Endothelial cell of umbilical vein (primary cell): ENCODE measurements at regions of chr4 and their contacts with region 1.

Region 1: GRCh38 chr4:123661080-123661737 is 264.6 kb downstream of the SPRY1 start:
- DNase-seq: peak; percentile 49
- H3K4me3 ChIP-seq: no peak overlapping the region
- H3K27ac ChIP-seq: no peak overlapping the region
- H3K4me1 ChIP-seq: no peaks in the 10 kb centered on the region
- H3K27me3 ChIP-seq: no peaks in the 10 kb centered on the region
- CTCF ChIP-seq: peak; percentile 27 to 37
- POLR2A ChIP-seq: no peak

Region 2: GRCh38 chr4:123102897-123103471 is 558.2 kb before region 1 on chr4:
- CTCF ChIA-PET with region 1: interaction called, 10 read pairs
- POLR2A ChIA-PET with region 1: no interaction called
- dilution Hi-C with region 1: no loop called
- intact Hi-C with region 1: loop called (anchors 1 kb)
- DNase-seq: peak; percentile 52
- H3K4me3 ChIP-seq: no peak overlapping the region
- H3K27ac ChIP-seq: no peak overlapping the region
- H3K4me1 ChIP-seq: no peaks in the 10 kb centered on the region
- H3K27me3 ChIP-seq: no peaks in the 10 kb centered on the region
- CTCF ChIP-seq: peak; percentile 37 to 44
- POLR2A ChIP-seq: no peak

Region 3: GRCh38 chr4:123340381-123340701 is 320.9 kb before region 1 on chr4:
- CTCF ChIA-PET with region 1: no interaction called
- POLR2A ChIA-PET with region 1: no interaction called
- dilution Hi-C with region 1: no loop called
- intact Hi-C with region 1: loop called (anchors 5 kb)
- DNase-seq: peak; percentile 92
- H3K4me3 ChIP-seq: no peak overlapping the region
- H3K27ac ChIP-seq: peak overlapping the region; percentile 90
- H3K4me1 ChIP-seq: peaks cover 58% of the 10 kb centered on the region
- H3K27me3 ChIP-seq: no peaks in the 10 kb centered on the region
- CTCF ChIP-seq: no peak
- POLR2A ChIP-seq: peak; percentile 29

Region 4: DNA sequence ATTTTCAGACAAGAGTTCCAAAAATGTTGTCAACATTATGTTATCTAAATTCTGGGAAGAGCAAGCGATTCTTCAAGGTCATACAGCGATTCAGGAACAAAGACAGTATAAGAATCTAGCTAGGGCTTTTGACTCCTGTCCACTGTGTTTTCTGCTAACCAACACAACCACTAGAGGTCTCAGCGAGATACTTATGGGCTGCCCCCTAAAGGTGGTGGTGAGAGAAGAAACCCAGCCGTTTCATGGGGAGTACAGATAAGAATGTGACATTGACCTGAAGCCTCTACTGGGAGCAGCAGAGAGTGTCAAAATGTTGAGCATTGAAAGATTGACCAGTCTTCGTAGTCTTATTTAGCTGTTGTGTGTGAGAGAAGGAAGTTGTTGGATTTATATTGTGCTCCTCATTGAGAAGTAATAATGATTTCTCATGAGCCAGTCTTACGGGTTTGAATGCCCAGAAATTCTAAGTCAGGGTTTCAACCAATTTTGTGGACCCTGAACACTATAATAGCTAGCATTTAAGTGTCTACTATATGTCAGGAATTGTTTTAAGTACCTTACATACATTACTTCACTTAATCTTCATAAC is 96.4 kb before region 1 on chr4:
- CTCF ChIA-PET with region 1: interaction called, 30 read pairs
- POLR2A ChIA-PET with region 1: no interaction called
- dilution Hi-C with region 1: no loop called
- intact Hi-C with region 1: loop called (anchors 1 kb)
- DNase-seq: peak; percentile 74
- H3K4me3 ChIP-seq: no peak overlapping the region
- H3K27ac ChIP-seq: no peak overlapping the region
- H3K4me1 ChIP-seq: peaks cover 5% of the 10 kb centered on the region
- H3K27me3 ChIP-seq: peaks cover 2 to 5% of the 10 kb centered on the region in 2 experiments
- CTCF ChIP-seq: peak; percentile 81 to 84
- POLR2A ChIP-seq: no peak

Region 5: GRCh38 chr4:123649645-123650391 is 11.4 kb before region 1 on chr4:
- CTCF ChIA-PET with region 1: interaction called, 12 read pairs
- POLR2A ChIA-PET with region 1: no interaction called
- dilution Hi-C with region 1: no loop called
- intact Hi-C with region 1: no loop called
- DNase-seq: no peak
- H3K4me3 ChIP-seq: no peak overlapping the region
- H3K27ac ChIP-seq: no peak overlapping the region
- H3K4me1 ChIP-seq: no peaks in the 10 kb centered on the region
- H3K27me3 ChIP-seq: no peaks in the 10 kb centered on the region
- CTCF ChIP-seq: no peak
- POLR2A ChIP-seq: no peak

Region 6: DNA sequence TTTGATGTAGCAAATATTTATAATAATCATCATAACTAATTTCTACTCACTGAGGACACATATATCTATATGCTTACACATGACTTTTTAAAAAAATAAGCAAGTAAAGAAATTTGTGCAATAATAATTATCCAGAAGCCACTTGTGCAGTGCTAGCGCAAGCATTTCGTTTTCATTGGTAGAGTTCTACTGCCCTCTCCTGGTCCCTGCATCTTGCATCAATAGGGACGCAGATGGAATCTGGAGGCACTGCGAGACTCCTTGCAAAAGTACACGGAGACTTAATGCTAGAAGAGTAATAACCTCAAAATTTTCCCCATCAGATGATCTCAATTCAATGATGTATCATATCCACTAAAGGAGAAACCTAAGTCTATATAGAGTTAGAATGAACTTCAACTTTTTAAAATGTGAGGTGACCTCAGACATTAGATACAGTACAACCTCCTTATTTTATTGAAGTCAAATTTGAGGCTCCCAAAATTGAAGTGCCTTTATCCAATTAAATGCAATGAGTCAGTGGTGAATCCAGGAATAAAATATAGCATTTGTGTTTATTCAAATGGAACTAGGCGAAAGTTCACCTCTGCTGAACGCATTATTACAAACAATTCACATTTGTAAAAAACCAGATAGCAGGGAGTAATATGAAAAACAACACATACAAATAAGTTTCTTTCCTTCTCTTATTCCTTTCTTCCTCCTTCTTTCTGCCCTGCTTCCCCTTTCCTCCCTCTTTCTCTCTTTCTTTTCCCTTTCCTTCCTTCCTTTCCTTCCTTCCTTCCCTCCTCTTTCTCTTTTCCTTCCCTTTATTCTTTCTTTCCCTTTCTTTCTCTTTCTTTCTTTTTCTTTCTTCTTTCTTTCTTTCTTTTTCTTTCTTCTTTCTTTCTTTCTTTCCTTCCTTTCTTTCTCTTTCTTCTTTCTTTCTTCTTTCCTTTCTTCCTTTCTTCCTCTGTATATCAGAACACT is 601.3 kb after region 1 on chr4:
- CTCF ChIA-PET with region 1: no interaction called
- POLR2A ChIA-PET with region 1: no interaction called
- dilution Hi-C with region 1: no loop called
- intact Hi-C with region 1: loop called (anchors 1 kb)
- DNase-seq: peak; percentile 86
- H3K4me3 ChIP-seq: no peak overlapping the region
- H3K27ac ChIP-seq: no peak overlapping the region
- H3K4me1 ChIP-seq: no peaks in the 10 kb centered on the region
- H3K27me3 ChIP-seq: no peaks in the 10 kb centered on the region
- CTCF ChIP-seq: peak; percentile 70 to 87
- POLR2A ChIP-seq: no peak